ENCODE measurements at regions of chr13 and their contacts with region 1.

Region 1: GRCh38 chr13:21476893-21477472 is 17.9 kb upstream of the ZDHHC20 start:
- DNase-seq: peak; percentile 64
- ATAC-seq: peak; percentile 88
- H3K4me3 ChIP-seq: peak overlapping the region; percentile 49 to 81 (median 77)
- H3K27ac ChIP-seq: no peak overlapping the region
- H3K4me1 ChIP-seq: peaks cover 20% of the 10 kb centered on the region; the same call in 1 of the 2 replicates
- H3K27me3 ChIP-seq: peaks cover 0 to 2% of the 10 kb centered on the region in 2 experiments; a peak in 1 of 5 replicates
- CTCF ChIP-seq: peak; percentile 92
- EP300 ChIP-seq: no peak
- POLR2A ChIP-seq: no peak
- RAD21 ChIP-seq: peak; percentile 75

Region 2: DNA sequence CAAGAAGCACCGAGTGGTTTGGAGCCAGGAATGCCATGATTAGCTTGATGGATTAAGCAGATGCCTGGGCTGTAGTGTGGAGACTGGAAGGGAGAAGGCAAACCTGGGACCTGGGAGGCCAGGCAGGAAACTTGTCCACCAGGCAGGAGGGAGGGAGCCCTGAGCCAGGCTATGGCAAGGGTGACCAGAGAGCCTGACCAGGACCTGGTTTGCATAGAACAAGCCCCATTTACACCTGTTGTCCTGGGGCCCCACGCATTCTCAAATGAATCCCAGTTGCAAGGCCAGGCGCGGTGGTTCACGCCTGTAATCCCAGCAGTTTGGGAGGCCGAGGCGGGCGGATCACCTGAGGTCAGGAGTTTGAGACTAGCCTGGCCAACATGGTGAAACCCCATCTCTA is 365.4 kb before region 1 on chr13:
- CTCF ChIA-PET with region 1: interaction called, 4 read pairs
- POLR2A ChIA-PET with region 1: no interaction called
- in situ Hi-C with region 1: no loop called
- intact Hi-C with region 1: loop called (anchors 5 kb)
- DNase-seq: no peak
- ATAC-seq: no peak
- H3K4me3 ChIP-seq: no peak overlapping the region
- H3K27ac ChIP-seq: no peak overlapping the region
- H3K4me1 ChIP-seq: peaks cover 55% of the 10 kb centered on the region
- H3K27me3 ChIP-seq: no peaks in the 10 kb centered on the region
- CTCF ChIP-seq: no peak
- EP300 ChIP-seq: no peak
- POLR2A ChIP-seq: no peak
- RAD21 ChIP-seq: no peak

Region 3: GRCh38 chr13:21297914-21298831 is 178.8 kb before region 1 on chr13:
- CTCF ChIA-PET with region 1: interaction called, 27 read pairs
- POLR2A ChIA-PET with region 1: no interaction called
- in situ Hi-C with region 1: loop called (anchors 5 kb)
- intact Hi-C with region 1: loop called (anchors 1 kb)
- DNase-seq: peak; percentile 83
- ATAC-seq: peak; percentile 97
- H3K4me3 ChIP-seq: peak overlapping the region; percentile 76 to 85 (median 83)
- H3K27ac ChIP-seq: peak overlapping the region; percentile 41
- H3K4me1 ChIP-seq: peaks cover 12% of the 10 kb centered on the region
- H3K27me3 ChIP-seq: no peaks in the 10 kb centered on the region
- CTCF ChIP-seq: peak; percentile 97
- EP300 ChIP-seq: peak in 1 of 2 experiments; percentile 52; a peak in 2 of 4 replicates
- POLR2A ChIP-seq: no peak
- RAD21 ChIP-seq: peak; percentile 55

Region 4: DNA sequence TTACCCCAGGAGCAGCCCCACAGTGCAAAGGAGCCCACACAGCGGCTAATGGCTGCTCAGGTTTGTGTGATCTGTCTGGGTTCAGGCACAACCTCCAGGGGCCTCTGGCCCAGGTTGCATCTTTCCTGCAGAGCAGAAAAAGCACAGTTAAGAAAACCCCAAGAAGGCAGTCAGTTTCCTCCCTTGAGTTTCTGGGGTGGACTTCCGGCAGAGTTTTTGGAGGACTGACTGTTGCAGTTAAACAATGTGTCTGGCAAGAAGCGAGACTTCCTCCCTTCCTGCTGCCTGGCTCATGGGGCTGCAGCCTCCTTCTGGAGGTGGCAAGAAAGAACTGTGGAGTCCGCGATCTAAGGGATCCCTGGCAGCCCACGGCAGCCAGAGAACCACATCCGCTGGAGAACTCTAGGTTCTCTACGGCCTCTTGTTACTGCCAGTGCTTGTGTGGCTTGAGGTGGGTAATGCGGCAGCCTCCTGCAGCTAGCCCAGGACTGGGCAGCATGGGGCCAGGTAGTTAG is 132.3 kb before region 1 on chr13:
- CTCF ChIA-PET with region 1: no interaction called
- POLR2A ChIA-PET with region 1: no interaction called
- in situ Hi-C with region 1: loop called (anchors 5 kb)
- intact Hi-C with region 1: no loop called
- DNase-seq: no peak
- ATAC-seq: peak; percentile 36
- H3K4me3 ChIP-seq: no peak overlapping the region
- H3K27ac ChIP-seq: no peak overlapping the region
- H3K4me1 ChIP-seq: no peaks in the 10 kb centered on the region
- H3K27me3 ChIP-seq: no peaks in the 10 kb centered on the region
- CTCF ChIP-seq: no peak
- EP300 ChIP-seq: no peak
- POLR2A ChIP-seq: no peak
- RAD21 ChIP-seq: no peak

Region 5: GRCh38 chr13:21436582-21436981 is 40.4 kb before region 1 on chr13:
- CTCF ChIA-PET with region 1: no interaction called
- POLR2A ChIA-PET with region 1: no interaction called
- in situ Hi-C with region 1: no loop called
- intact Hi-C with region 1: no loop called
- DNase-seq: no peak
- ATAC-seq: no peak
- H3K4me3 ChIP-seq: no peak overlapping the region
- H3K27ac ChIP-seq: no peak overlapping the region
- H3K4me1 ChIP-seq: peaks cover 15% of the 10 kb centered on the region
- H3K27me3 ChIP-seq: no peaks in the 10 kb centered on the region
- CTCF ChIP-seq: no peak
- EP300 ChIP-seq: no peak
- POLR2A ChIP-seq: no peak
- RAD21 ChIP-seq: no peak

Region 6: GRCh38 chr13:22200440-22200839 is 723.5 kb after region 1 on chr13:
- CTCF ChIA-PET with region 1: no interaction called
- POLR2A ChIA-PET with region 1: no interaction called
- in situ Hi-C with region 1: no loop called
- intact Hi-C with region 1: no loop called
- DNase-seq: no peak
- ATAC-seq: no peak
- H3K4me3 ChIP-seq: no peak overlapping the region
- H3K27ac ChIP-seq: no peak overlapping the region
- H3K4me1 ChIP-seq: no peaks in the 10 kb centered on the region
- H3K27me3 ChIP-seq: no peaks in the 10 kb centered on the region; a peak in 1 of 5 replicates
- CTCF ChIP-seq: no peak
- EP300 ChIP-seq: no peak
- POLR2A ChIP-seq: no peak
- RAD21 ChIP-seq: no peak

Measured in HepG2 (cell line).